ENCODE measurements at regions of chr11 and their contacts with region 1.

Region 1: GRCh38 chr11:26753723-26754504 is 32.1 kb upstream of the SLC5A12 start:
- DNase-seq: peak; percentile 71
- H3K4me3 ChIP-seq: no peak overlapping the region
- H3K27ac ChIP-seq: no peak overlapping the region
- H3K4me1 ChIP-seq: no peaks in the 10 kb centered on the region
- H3K27me3 ChIP-seq: no peaks in the 10 kb centered on the region
- CTCF ChIP-seq: peak; percentile 52 to 65 (median 60)
- POLR2A ChIP-seq: no peak

Region 2: DNA sequence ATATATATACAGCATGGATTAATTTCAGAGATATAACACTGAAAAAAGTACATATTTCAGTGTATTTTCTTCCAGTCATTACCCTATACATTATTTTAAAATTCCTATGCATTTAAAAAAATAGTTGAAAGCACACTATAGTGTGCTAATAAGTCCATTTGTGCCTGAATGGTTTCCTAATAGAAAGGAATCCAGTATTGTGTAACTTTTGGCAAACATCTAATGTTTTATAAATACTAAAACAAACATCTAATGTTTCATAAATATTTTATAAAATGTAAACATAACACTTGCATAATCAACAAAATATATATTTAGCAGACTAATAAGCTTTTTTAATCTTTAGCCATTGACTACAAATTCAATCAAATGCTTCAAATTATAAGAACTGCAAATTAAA is 113.4 kb after region 1 on chr11:
- intact Hi-C with region 1: no loop called
- DNase-seq: no peak
- H3K4me3 ChIP-seq: no peak overlapping the region
- H3K27ac ChIP-seq: no peak overlapping the region
- H3K4me1 ChIP-seq: no peaks in the 10 kb centered on the region
- H3K27me3 ChIP-seq: no peaks in the 10 kb centered on the region
- CTCF ChIP-seq: no peak
- POLR2A ChIP-seq: no peak

Region 3: GRCh38 chr11:27124514-27125264 is 370.8 kb after region 1 on chr11:
- intact Hi-C with region 1: loop called (anchors 5 kb)
- DNase-seq: no peak
- H3K4me3 ChIP-seq: no peak overlapping the region
- H3K27ac ChIP-seq: no peak overlapping the region
- H3K4me1 ChIP-seq: no peaks in the 10 kb centered on the region
- H3K27me3 ChIP-seq: no peaks in the 10 kb centered on the region
- CTCF ChIP-seq: no peak
- POLR2A ChIP-seq: no peak

Region 4: DNA sequence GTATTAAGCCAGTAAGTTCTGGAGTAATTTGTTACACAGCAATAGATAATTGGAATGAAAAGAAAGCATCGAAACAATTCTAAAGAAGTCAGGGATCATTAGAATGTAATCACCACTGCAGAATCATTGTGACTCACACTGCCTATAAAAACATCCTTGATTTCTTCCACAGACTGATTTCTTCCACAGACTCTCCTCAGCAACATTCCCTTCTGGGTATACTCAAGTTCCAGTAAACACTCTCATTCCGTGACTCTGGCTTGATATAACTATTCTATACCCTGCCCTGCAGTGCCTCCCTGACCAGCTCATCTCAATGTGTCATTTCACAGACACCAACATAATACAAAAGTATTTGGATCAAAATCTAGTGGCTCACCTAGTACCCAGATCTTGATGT is 407.2 kb after region 1 on chr11:
- intact Hi-C with region 1: loop called (anchors 10 kb)
- DNase-seq: no peak
- H3K4me3 ChIP-seq: no peak overlapping the region
- H3K27ac ChIP-seq: no peak overlapping the region
- H3K4me1 ChIP-seq: no peaks in the 10 kb centered on the region
- H3K27me3 ChIP-seq: no peaks in the 10 kb centered on the region
- CTCF ChIP-seq: no peak
- POLR2A ChIP-seq: no peak